Mammary epithelial cell (primary cell): ENCODE measurements at regions of chr14 and their contacts with region 1.

Region 1: DNA sequence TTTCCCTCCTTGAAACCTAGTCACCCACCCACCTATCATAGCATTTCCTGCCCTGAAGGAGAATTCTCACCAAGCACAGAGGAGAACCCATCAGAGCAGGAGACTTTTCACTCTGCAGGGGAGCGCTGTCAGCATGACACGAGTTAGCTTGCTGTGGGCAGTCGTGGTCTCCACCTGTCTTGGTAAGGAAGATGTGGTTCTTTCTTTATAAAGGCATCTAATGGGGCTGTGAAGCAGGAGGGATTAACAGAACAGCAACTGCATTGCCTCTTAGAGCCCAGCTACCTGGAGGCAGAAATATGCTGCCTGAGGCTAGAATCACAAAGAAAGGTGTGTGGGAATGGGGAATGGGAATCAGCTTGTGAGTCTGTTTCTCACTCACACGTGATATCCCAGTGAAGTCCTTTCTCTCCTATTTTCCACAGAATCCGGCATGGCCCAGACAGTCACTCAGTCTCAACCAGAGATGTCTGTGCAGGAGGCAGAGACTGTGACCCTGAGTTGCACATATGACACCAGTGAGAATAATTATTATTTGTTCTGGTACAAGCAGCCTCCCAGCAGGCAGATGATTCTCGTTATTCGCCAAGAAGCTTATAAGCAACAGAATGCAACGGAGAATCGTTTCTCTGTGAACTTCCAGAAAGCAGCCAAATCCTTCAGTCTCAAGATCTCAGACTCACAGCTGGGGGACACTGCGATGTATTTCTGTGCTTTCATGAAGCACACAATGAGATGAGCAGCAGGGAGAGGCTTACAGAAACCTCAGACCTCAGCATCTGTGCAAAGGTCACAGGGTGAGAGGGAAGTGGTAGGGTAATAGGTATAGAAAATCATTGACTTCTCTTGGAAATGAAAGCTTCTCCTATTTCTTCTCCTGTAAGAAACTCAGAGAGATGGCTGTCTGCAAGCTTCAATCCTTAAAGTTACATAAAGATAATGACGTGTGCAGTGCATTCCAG is 316.9 kb downstream of the DAD1 start:
- DNase-seq: no peak
- H3K4me3 ChIP-seq: no peak overlapping the region
- H3K27ac ChIP-seq: no peak overlapping the region
- H3K4me1 ChIP-seq: peaks cover 19% of the 10 kb centered on the region
- H3K27me3 ChIP-seq: no peaks in the 10 kb centered on the region
- CTCF ChIP-seq: no peak

Region 2: DNA sequence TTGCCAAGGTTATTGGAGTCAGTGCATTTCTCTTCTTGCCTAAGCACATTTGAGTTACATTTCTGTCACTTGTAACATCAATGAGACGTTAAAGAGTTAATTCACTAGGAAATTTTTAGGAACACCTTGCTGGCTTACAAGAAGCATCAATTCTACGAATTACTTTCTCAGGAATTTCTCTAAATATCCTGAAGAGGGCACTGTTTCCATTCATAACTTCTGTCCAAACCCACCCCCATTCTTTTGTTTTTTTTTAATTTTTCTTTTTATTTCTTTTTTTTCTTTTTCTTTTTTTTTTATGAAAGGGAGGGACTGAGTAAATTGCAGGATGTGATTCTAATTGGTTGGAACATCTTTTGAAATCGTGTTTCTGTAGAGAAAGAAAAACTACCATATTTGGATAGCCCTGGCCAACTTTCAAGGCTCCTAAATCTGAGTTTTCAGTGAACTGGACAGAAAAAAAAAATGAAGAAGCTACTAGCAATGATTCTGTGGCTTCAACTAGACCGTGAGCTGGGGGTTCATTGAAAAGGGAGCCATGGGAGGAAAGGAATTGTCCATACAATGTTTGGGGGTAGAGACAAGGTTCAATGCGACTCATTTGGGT is 31.6 kb after region 1 on chr14:
- CTCF ChIA-PET with region 1: no interaction called
- dilution Hi-C with region 1: loop called (anchors 5 kb)
- in situ Hi-C with region 1: no loop called
- intact Hi-C with region 1: no loop called
- DNase-seq: no peak
- H3K4me3 ChIP-seq: no peak overlapping the region
- H3K27ac ChIP-seq: no peak overlapping the region
- H3K4me1 ChIP-seq: no peaks in the 10 kb centered on the region
- H3K27me3 ChIP-seq: no peaks in the 10 kb centered on the region
- CTCF ChIP-seq: peak; percentile 49 to 52

Region 3: GRCh38 chr14:22403281-22403680 is 131.2 kb after region 1 on chr14:
- CTCF ChIA-PET with region 1: no interaction called
- dilution Hi-C with region 1: no loop called
- in situ Hi-C with region 1: no loop called
- intact Hi-C with region 1: no loop called
- DNase-seq: no peak
- H3K4me3 ChIP-seq: no peak overlapping the region
- H3K27ac ChIP-seq: no peak overlapping the region
- H3K4me1 ChIP-seq: no peaks in the 10 kb centered on the region
- H3K27me3 ChIP-seq: no peaks in the 10 kb centered on the region
- CTCF ChIP-seq: no peak